ENCODE measurements at regions of chr7 and their contacts with region 1.

Region 1: DNA sequence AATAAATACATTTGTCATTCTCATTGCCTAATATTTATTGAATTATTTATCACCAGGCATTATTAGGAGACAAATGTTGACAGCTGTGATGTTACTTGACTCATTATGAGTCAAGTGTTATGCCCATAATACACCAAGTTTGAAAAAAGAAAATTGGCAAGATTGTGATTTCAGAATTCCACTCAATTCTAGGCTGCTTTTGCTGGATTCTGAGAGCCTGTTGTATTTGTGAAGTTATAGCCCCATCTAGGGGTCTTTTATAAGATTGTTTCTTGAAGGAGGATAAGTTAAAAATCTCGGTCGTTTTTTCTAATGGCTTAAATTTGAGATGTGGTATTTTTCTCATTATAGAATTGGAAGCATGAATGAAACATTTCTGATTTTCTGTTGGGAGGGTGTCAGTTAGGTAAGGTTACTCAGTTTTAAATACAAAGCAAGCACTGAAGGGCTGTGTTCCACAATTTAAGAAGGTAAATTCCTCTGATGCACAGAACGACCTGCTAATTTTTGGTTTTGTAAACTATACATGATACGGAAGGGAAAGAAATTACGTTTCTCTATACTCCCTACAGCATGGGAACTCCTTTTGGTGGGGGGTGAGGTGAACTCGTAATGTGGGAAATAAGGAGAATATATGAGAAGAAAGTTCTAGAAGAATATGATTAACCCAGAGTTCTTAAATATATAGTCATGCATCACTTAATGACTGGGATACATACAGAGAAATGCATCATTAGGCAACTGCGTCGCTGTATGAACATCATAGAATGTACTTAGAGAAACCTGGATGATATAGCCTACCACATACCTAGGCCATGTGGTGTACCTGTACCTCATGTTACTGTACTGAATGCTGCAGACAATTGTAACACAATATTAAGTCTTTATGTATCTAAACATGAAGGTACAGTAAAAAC is 2.6 kb downstream of the STK31 start:
- DNase-seq: peak; percentile 44

Region 2: GRCh38 chr7:23570592-23571200 is 141.9 kb before region 1 on chr7:
- CTCF ChIA-PET with region 1: interaction called, 11 read pairs
- POLR2A ChIA-PET with region 1: interaction called, 3 read pairs
- DNase-seq: peak; percentile 76

Region 3: DNA sequence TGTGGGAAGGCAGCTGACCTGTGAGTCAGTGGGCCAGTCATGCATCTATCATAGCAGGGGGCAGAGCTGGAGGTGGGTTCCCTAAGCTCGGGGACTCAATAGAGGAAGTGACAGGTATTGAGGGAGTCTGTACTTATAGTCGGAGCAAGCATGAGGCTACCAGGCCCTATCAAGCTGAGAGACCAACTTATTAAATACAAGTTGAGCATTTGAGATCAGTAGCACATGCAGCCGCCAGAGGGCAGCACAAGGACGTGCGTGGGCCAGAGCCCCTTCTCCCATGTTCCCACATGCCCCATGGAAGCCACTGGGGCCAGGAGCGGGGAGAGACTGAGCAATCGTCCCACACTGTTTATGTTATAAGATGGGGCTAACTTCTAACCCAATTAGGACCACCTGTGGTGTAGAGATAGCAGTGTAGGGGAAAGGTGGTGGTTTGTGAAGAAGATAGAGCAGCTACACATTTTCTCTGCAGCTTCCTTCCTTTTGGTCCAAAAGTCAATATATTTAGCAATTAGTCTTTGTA is 15.6 kb before region 1 on chr7:
- CTCF ChIA-PET with region 1: interaction called, 12 read pairs
- POLR2A ChIA-PET with region 1: no interaction called
- DNase-seq: peak; percentile 81

Region 4: GRCh38 chr7:23759671-23760391 is 47.2 kb after region 1 on chr7:
- CTCF ChIA-PET with region 1: no interaction called
- POLR2A ChIA-PET with region 1: no interaction called
- DNase-seq: no peak

Region 5: GRCh38 chr7:23802720-23803397 is 90.2 kb after region 1 on chr7:
- CTCF ChIA-PET with region 1: no interaction called
- POLR2A ChIA-PET with region 1: no interaction called
- DNase-seq: no peak

Measured in HEK293T (cell line).